Caco-2 (cell line): ENCODE measurements at regions of chr1 and their contacts with region 1.

Region 1: GRCh38 chr1:210311726-210312493 is 16.8 kb upstream of the HHAT start:
- DNase-seq: no peak
- H3K4me3 ChIP-seq: peak overlapping the region; percentile 45
- H3K4me3 Mint-ChIP-seq: peak overlapping the region; percentile 85
- H3K27ac Mint-ChIP-seq: no peak overlapping the region
- H3K4me1 ChIP-seq: no peaks in the 10 kb centered on the region
- H3K4me1 Mint-ChIP-seq: peaks cover 6% of the 10 kb centered on the region
- H3K27me3 ChIP-seq: no peaks in the 10 kb centered on the region
- H3K27me3 Mint-ChIP-seq: peaks cover 4% of the 10 kb centered on the region
- CTCF ChIP-seq: no peak

Region 2: DNA sequence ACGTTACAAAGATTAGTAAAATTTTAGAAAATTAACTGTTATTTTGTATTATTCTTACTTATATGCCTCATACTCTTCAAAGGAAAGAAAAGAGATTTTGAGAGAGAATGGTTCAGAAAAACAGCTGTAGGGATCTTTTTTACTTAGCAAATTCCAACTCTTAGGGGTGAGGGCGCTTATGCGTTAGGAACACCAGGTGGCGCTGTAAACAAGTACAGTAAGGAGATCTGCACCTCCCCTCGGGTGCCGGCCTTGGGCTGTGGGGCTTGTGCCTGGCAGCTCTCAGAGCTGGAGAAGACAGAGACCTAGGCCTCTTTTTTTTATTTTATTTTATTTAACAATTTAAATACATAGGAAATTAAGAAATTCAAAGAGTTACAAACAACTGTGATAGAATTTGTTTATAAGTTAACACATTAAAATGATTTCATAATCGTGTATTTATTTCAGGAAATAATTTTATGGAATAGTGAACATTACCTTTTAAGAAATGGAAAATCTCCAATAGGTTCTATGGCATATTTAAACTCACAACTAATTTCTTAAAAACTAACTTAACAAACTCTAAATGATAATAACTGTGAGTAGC is 451.5 kb before region 1 on chr1:
- CTCF ChIA-PET with region 1: interaction called, 4 read pairs
- POLR2A ChIA-PET with region 1: no interaction called
- intact Hi-C with region 1: loop called (anchors 1 kb)
- DNase-seq: peak; percentile 77 to 80
- H3K4me3 ChIP-seq: no peak overlapping the region
- H3K4me3 Mint-ChIP-seq: no peak overlapping the region
- H3K27ac Mint-ChIP-seq: no peak overlapping the region
- H3K4me1 ChIP-seq: no peaks in the 10 kb centered on the region
- H3K4me1 Mint-ChIP-seq: no peaks in the 10 kb centered on the region
- H3K27me3 ChIP-seq: no peaks in the 10 kb centered on the region
- H3K27me3 Mint-ChIP-seq: no peaks in the 10 kb centered on the region
- CTCF ChIP-seq: peak; percentile 90 to 92

Region 3: GRCh38 chr1:210061992-210062391 is 249.9 kb before region 1 on chr1:
- CTCF ChIA-PET with region 1: interaction called, 13 read pairs
- POLR2A ChIA-PET with region 1: no interaction called
- intact Hi-C with region 1: no loop called
- DNase-seq: no peak
- H3K4me3 ChIP-seq: no peak overlapping the region
- H3K4me3 Mint-ChIP-seq: no peak overlapping the region
- H3K27ac Mint-ChIP-seq: no peak overlapping the region
- H3K4me1 ChIP-seq: no peaks in the 10 kb centered on the region
- H3K4me1 Mint-ChIP-seq: no peaks in the 10 kb centered on the region
- H3K27me3 ChIP-seq: no peaks in the 10 kb centered on the region
- H3K27me3 Mint-ChIP-seq: no peaks in the 10 kb centered on the region
- CTCF ChIP-seq: no peak

Region 4: DNA sequence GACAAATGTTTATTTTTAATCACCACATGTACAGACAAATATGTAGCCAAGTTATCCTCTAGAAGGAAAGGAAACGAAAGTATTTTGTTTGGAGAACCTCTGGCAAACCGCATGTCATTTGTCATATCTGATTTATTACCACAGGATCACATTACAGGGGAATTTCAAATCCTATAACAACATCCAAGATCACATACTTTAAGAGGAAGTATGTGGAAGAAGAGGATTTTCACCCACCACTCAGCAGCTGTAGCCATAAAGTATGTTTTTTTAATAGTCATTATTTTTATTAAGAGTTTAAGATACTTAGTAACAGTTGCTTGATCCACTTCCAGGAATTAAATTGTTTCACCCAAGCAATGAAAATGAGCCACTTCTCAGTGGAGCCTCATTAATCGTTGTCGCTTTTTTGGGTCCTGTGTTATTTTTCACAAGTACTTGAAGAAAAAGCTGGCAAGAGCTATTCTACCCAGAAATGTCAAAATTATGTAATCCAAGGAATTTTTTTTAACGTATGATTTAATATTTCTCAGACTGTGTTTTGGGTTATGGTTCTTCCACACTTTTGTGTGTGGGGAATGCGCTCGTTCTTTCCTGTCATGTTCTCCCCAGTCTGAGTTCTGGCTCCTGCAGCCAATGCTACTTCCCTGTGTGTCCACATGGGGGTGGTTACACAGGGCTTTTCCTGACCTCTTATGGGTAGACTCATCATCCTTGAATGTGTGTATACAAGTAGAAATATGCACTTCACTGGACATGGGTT is 72.4 kb before region 1 on chr1:
- CTCF ChIA-PET with region 1: interaction called, 5 read pairs
- POLR2A ChIA-PET with region 1: no interaction called
- intact Hi-C with region 1: loop called (anchors 1 kb)
- DNase-seq: peak; percentile 49 to 57
- H3K4me3 ChIP-seq: no peak overlapping the region
- H3K4me3 Mint-ChIP-seq: no peak overlapping the region
- H3K27ac Mint-ChIP-seq: no peak overlapping the region
- H3K4me1 ChIP-seq: no peaks in the 10 kb centered on the region
- H3K4me1 Mint-ChIP-seq: peaks cover 8% of the 10 kb centered on the region
- H3K27me3 ChIP-seq: no peaks in the 10 kb centered on the region
- H3K27me3 Mint-ChIP-seq: no peaks in the 10 kb centered on the region
- CTCF ChIP-seq: peak; percentile 65 to 70

Region 5: GRCh38 chr1:210301615-210302000 is 10.3 kb before region 1 on chr1:
- CTCF ChIA-PET with region 1: no interaction called
- POLR2A ChIA-PET with region 1: no interaction called
- intact Hi-C with region 1: no loop called
- DNase-seq: no peak
- H3K4me3 ChIP-seq: no peak overlapping the region
- H3K4me3 Mint-ChIP-seq: no peak overlapping the region
- H3K27ac Mint-ChIP-seq: no peak overlapping the region
- H3K4me1 ChIP-seq: no peaks in the 10 kb centered on the region
- H3K4me1 Mint-ChIP-seq: no peaks in the 10 kb centered on the region
- H3K27me3 ChIP-seq: no peaks in the 10 kb centered on the region; the same call in 1 of the 2 replicates
- H3K27me3 Mint-ChIP-seq: no peaks in the 10 kb centered on the region
- CTCF ChIP-seq: no peak

Region 6: GRCh38 chr1:210342986-210343780 is 31.3 kb after region 1 on chr1:
- CTCF ChIA-PET with region 1: no interaction called
- POLR2A ChIA-PET with region 1: no interaction called
- intact Hi-C with region 1: no loop called
- DNase-seq: no peak
- H3K4me3 ChIP-seq: no peak overlapping the region
- H3K4me3 Mint-ChIP-seq: no peak overlapping the region
- H3K27ac Mint-ChIP-seq: no peak overlapping the region
- H3K4me1 ChIP-seq: no peaks in the 10 kb centered on the region
- H3K4me1 Mint-ChIP-seq: no peaks in the 10 kb centered on the region
- H3K27me3 ChIP-seq: no peaks in the 10 kb centered on the region
- H3K27me3 Mint-ChIP-seq: no peaks in the 10 kb centered on the region
- CTCF ChIP-seq: no peak

Region 7: GRCh38 chr1:210400043-210400840 is 88.3 kb after region 1 on chr1:
- CTCF ChIA-PET with region 1: no interaction called
- POLR2A ChIA-PET with region 1: no interaction called
- intact Hi-C with region 1: loop called (anchors 1 kb)
- DNase-seq: peak; percentile 71 to 79
- H3K4me3 ChIP-seq: no peak overlapping the region
- H3K4me3 Mint-ChIP-seq: no peak overlapping the region
- H3K27ac Mint-ChIP-seq: peak overlapping the region; percentile 62
- H3K4me1 ChIP-seq: no peaks in the 10 kb centered on the region
- H3K4me1 Mint-ChIP-seq: peaks cover 14% of the 10 kb centered on the region
- H3K27me3 ChIP-seq: no peaks in the 10 kb centered on the region
- H3K27me3 Mint-ChIP-seq: no peaks in the 10 kb centered on the region
- CTCF ChIP-seq: peak; percentile 83 to 92